ENCODE measurements at regions of chr2 and their contacts with region 1.

Region 1: GRCh38 chr2:96174251-96175144 is 29.3 kb upstream of the DUSP2 start:
- DNase-seq: peak; percentile 85
- H3K4me3 Mint-ChIP-seq: no peak overlapping the region
- H3K27ac Mint-ChIP-seq: no peak overlapping the region
- H3K4me1 Mint-ChIP-seq: peaks cover 3% of the 10 kb centered on the region
- H3K27me3 Mint-ChIP-seq: peaks cover 4% of the 10 kb centered on the region

Region 2: GRCh38 chr2:96116879-96117697 is 57.4 kb before region 1 on chr2:
- CTCF ChIA-PET with region 1: interaction called, 21 read pairs
- POLR2A ChIA-PET with region 1: no interaction called
- DNase-seq: peak; percentile 65
- H3K4me3 Mint-ChIP-seq: no peak overlapping the region
- H3K27ac Mint-ChIP-seq: no peak overlapping the region
- H3K4me1 Mint-ChIP-seq: peaks cover 8% of the 10 kb centered on the region
- H3K27me3 Mint-ChIP-seq: peaks cover 46% of the 10 kb centered on the region

Region 3: GRCh38 chr2:96138179-96139145 is 36.0 kb before region 1 on chr2 and contains the start of gene ASTL:
- CTCF ChIA-PET with region 1: interaction called, 323 read pairs
- POLR2A ChIA-PET with region 1: interaction called, 34 read pairs
- DNase-seq: peak; percentile 72
- H3K4me3 Mint-ChIP-seq: no peak within 1 kb of the TSS
- H3K27ac Mint-ChIP-seq: no peak within 1 kb of the TSS
- H3K4me1 Mint-ChIP-seq: peaks cover 19% of the 10 kb centered on the region
- H3K27me3 Mint-ChIP-seq: no peaks in the 10 kb centered on the region
- total RNA-seq, gene ASTL: 0.25 to 0.53 TPM

Region 4: DNA sequence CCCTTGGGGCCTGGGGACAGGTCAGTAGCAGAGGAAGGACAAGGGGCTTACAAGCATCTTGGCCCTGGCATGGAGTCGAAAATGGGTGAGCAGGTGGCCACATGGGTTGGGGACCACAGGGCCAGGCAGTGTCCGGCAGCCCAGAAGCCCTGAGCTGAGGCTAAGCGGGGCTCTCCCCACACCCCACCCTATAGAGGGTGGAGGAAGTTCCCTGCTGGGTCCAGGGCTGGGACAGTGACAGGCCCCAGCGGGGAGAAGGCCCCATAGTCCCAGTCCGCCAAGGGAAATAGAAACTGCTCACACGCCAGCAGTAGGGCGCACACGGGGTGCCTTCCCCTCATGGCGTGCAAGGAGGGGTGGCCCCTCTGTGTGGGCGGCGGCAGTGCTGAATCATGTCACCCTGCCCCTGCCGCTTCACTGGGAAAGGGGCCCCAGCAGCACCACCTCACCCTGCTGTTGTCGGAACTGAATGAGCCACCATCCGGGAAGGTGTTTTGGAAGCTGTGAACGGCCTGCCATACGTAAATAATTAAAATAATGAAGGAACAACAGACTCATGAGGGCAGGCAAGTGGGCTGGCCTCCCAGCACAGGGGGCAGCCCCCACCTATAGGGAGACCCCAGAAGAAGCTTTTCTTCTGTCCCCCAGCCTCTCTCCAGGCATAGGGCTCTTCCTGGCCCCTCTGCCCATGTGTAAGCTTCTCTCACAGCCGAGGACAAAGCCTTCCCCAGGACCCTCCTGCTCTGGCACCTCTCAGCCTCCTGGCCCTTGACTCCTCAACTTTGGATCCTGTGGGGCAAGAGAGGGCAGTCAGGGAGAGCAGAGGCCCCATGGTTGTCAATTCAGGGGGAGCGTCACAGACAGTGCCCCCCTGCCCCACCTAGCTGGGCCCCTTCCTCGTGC is 16.6 kb before region 1 on chr2:
- CTCF ChIA-PET with region 1: interaction called, 23 read pairs
- POLR2A ChIA-PET with region 1: interaction called, 3 read pairs
- DNase-seq: peak; percentile 81
- H3K4me3 Mint-ChIP-seq: peak overlapping the region; percentile 59
- H3K27ac Mint-ChIP-seq: peak overlapping the region; percentile 80
- H3K4me1 Mint-ChIP-seq: peaks cover 67% of the 10 kb centered on the region
- H3K27me3 Mint-ChIP-seq: no peaks in the 10 kb centered on the region

Region 5: GRCh38 chr2:96265840-96266679 is 91.6 kb after region 1 on chr2 and contains the starts of genes CIAO1 and TMEM127:
- CTCF ChIA-PET with region 1: interaction called, 14 read pairs
- POLR2A ChIA-PET with region 1: interaction called, 3 read pairs
- DNase-seq: peak; percentile 99
- H3K4me3 Mint-ChIP-seq: peak within 1 kb of the TSS; percentile 99
- H3K27ac Mint-ChIP-seq: peak within 1 kb of the TSS; percentile 94
- H3K4me1 Mint-ChIP-seq: peaks cover 47% of the 10 kb centered on the region
- H3K27me3 Mint-ChIP-seq: no peaks in the 10 kb centered on the region
- total RNA-seq, gene CIAO1: 64.4 to 67.4 TPM
- total RNA-seq, gene TMEM127: 42.4 to 44.0 TPM

Region 6: GRCh38 chr2:96389736-96390135 is 215.2 kb after region 1 on chr2:
- CTCF ChIA-PET with region 1: no interaction called
- POLR2A ChIA-PET with region 1: no interaction called
- DNase-seq: no peak
- H3K4me3 Mint-ChIP-seq: no peak overlapping the region
- H3K27ac Mint-ChIP-seq: peak overlapping the region; percentile 37
- H3K4me1 Mint-ChIP-seq: peaks cover 8% of the 10 kb centered on the region
- H3K27me3 Mint-ChIP-seq: no peaks in the 10 kb centered on the region

Measured in activated CD4-positive, alpha-beta memory T cell treated with anti-CD3 and anti-CD28 coated beads, Interleukin-2, amount 10 ng/mL, durations not matched to agents 7 days and 5 days (primary cell).